Stomach (tissue), 19 donors: ENCODE measurements at regions of chr11 and their contacts with region 1.

Region 1: GRCh38 chr11:124070915-124071635 is 29.9 kb upstream of the OR10G7 start:
- DNase-seq: peak; percentile 61 to 92
- H3K4me3 ChIP-seq: no peak overlapping the region
- H3K27ac ChIP-seq: no peak overlapping the region
- H3K4me1 ChIP-seq: peaks cover 0 to 23% (median 13%) of the 10 kb centered on the region in 4 donors
- H3K27me3 ChIP-seq: peaks cover 0 to 56% (median 21%) of the 10 kb centered on the region in 3 donors
- CTCF ChIP-seq: peak in 4 of 7 experiments; percentile 57 to 75 (median 66)
- EP300 ChIP-seq: no peak
- POLR2A ChIP-seq: no peak

Region 2: GRCh38 chr11:124194698-124195410 is 123.8 kb after region 1 on chr11:
- intact Hi-C with region 1: loop called (anchors 10 kb)
- DNase-seq: peak; percentile 39 to 74
- H3K4me3 ChIP-seq: no peak overlapping the region
- H3K27ac ChIP-seq: no peak overlapping the region
- H3K4me1 ChIP-seq: no peaks in the 10 kb centered on the region
- H3K27me3 ChIP-seq: no peaks in the 10 kb centered on the region
- CTCF ChIP-seq: peak in 5 of 7 experiments; percentile 8 to 48 (median 47)
- EP300 ChIP-seq: no peak
- POLR2A ChIP-seq: no peak